Endothelial cell of umbilical vein (primary cell): ENCODE measurements at regions of chr2 and their contacts with region 1.

Region 1: GRCh38 chr2:157596992-157597681 is 31.5 kb downstream of the ACVR1C start:
- DNase-seq: peak; percentile 4
- H3K4me3 ChIP-seq: no peak overlapping the region
- H3K27ac ChIP-seq: no peak overlapping the region
- H3K4me1 ChIP-seq: no peaks in the 10 kb centered on the region
- H3K27me3 ChIP-seq: peaks cover 10 to 20% of the 10 kb centered on the region in 2 experiments
- CTCF ChIP-seq: peak; percentile 18 to 56
- POLR2A ChIP-seq: no peak

Region 2: DNA sequence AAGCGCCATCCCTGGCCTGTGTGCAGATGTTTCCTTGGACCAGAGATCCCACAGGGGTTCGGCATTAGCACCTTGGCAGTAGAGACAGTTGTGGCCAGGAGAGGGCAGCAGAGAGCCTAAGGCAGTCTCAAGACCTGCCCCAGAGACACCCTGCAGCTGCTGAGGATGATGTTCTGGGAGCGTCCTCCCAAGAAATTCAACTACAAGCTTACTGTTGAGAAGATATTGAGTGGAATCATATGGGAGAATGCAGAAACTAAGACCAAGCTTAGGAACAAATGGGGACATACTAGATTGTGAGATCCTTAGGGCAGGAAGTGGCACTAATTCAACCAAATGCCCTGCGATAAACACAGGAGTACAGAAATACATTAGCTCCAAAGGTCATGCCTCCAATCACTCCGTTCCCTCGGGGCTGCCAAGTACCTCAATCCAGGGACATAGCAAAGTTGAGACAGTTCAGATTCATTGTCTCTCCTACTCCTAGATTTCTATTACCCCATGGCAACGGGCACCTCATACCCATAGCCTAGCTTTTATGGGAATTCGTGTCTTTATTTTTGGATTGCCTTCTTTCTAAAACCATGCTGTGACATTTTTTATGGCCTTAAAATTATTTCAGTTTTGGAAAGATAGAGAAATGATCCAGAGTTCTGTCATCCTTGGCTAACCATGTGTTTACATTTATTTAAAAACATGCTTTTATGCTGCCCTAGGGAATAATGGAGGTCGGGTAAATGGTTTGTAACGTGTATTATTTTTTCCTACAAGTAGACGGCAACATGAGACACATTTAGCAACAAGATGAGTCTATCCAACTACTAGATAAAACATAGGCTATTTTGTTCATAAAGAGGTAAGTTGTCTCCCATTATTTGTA is 269.3 kb before region 1 on chr2:
- CTCF ChIA-PET with region 1: interaction called, 3 read pairs
- POLR2A ChIA-PET with region 1: no interaction called
- dilution Hi-C with region 1: no loop called
- intact Hi-C with region 1: loop called (anchors 2 kb)
- DNase-seq: peak; percentile 65
- H3K4me3 ChIP-seq: no peak overlapping the region
- H3K27ac ChIP-seq: no peak overlapping the region
- H3K4me1 ChIP-seq: no peaks in the 10 kb centered on the region
- H3K27me3 ChIP-seq: peaks cover 0 to 4% of the 10 kb centered on the region in 2 experiments
- CTCF ChIP-seq: peak; percentile 89 to 94
- POLR2A ChIP-seq: no peak